GM13977 (cell line): ENCODE measurements at regions of chr5 and their contacts with region 1.

Region 1: DNA sequence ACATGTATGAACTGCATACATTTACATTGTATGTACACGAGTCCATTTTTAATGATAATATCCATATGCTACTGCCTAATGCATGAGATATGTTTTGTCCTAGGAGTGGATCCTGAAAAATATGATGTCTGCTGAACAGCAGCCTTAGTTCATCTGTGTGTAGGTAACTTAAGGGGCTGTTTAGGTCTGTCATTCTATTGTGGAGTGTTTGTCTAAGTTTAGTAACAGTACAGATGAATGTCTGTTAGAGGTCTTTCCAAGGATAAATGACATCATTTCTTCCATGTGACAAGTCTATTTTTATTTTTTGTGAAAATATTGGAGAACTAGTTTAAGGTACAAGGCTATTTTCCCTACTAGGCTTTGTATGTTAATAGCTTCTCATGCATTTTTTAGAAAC is 22.6 kb upstream of the CCDC112 start:
- DNase-seq: no peak
- CTCF ChIP-seq: no peak

Region 2: GRCh38 chr5:115579747-115580173 is 260.8 kb after region 1 on chr5:
- in situ Hi-C with region 1: loop called (anchors 5 kb)
- DNase-seq: peak; percentile 28
- CTCF ChIP-seq: no peak